ENCODE measurements at regions of chr5 and their contacts with region 1.

Region 1: GRCh38 chr5:80308526-80308925 is 11.3 kb upstream of the SPZ1 start:
- DNase-seq: no peak
- H3K4me3 ChIP-seq: no peak overlapping the region
- H3K27ac ChIP-seq: no peak overlapping the region
- H3K4me1 ChIP-seq: peaks cover 0 to 4% (median 0%) of the 10 kb centered on the region in 4 donors
- H3K27me3 ChIP-seq: no peaks in the 10 kb centered on the region
- CTCF ChIP-seq: no peak

Region 2: GRCh38 chr5:80093796-80094195 is 214.7 kb before region 1 on chr5:
- intact Hi-C with region 1: loop called (anchors 5 kb)
- DNase-seq: no peak
- H3K4me3 ChIP-seq: no peak overlapping the region
- H3K27ac ChIP-seq: no peak overlapping the region
- H3K4me1 ChIP-seq: no peaks in the 10 kb centered on the region
- H3K27me3 ChIP-seq: no peaks in the 10 kb centered on the region
- CTCF ChIP-seq: no peak

Region 3: DNA sequence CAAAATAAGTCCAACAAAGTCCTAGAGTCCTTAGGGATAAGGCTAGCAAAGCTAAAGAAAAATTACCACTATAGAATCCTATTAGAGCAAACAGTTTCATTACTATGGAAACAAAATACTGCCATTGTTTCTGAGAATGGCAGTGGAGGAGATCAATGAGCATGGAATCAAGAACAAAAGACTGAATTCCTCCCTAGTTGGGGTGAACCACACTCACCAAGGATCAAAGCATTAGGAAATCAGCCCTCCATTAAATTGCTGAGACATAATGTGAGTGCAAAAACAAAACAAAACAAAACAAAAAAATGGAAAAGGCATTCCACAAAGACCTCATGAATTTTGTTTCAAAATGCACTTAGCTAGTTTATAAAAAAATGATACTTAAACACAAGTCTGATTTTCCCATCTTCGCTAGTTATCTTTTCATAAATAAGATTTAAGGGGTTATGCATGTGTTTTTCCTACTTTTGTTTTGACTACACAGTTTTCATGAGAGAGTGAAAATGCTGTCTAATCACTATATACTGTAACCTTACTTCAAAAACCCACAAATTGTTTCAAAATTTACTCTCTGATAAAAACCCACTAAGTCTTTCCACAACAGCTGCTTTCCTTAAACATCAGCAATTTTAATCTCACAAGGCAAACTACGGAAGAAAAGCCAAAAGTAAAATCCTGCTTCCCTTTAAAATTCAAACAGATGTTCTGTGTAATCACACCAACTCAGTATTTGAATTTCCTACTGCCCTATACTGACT is 62.3 kb before region 1 on chr5:
- intact Hi-C with region 1: no loop called
- DNase-seq: no peak
- H3K4me3 ChIP-seq: no peak overlapping the region
- H3K27ac ChIP-seq: no peak overlapping the region
- H3K4me1 ChIP-seq: peaks cover 0 to 17% (median 11%) of the 10 kb centered on the region in 4 donors
- H3K27me3 ChIP-seq: no peaks in the 10 kb centered on the region
- CTCF ChIP-seq: no peak

Region 4: GRCh38 chr5:80275347-80275746 is 33.2 kb before region 1 on chr5:
- intact Hi-C with region 1: no loop called
- DNase-seq: no peak
- H3K4me3 ChIP-seq: no peak overlapping the region
- H3K27ac ChIP-seq: no peak overlapping the region
- H3K4me1 ChIP-seq: no peaks in the 10 kb centered on the region
- H3K27me3 ChIP-seq: no peaks in the 10 kb centered on the region
- CTCF ChIP-seq: peak in 1 of 2 experiments; percentile 20

Region 5: DNA sequence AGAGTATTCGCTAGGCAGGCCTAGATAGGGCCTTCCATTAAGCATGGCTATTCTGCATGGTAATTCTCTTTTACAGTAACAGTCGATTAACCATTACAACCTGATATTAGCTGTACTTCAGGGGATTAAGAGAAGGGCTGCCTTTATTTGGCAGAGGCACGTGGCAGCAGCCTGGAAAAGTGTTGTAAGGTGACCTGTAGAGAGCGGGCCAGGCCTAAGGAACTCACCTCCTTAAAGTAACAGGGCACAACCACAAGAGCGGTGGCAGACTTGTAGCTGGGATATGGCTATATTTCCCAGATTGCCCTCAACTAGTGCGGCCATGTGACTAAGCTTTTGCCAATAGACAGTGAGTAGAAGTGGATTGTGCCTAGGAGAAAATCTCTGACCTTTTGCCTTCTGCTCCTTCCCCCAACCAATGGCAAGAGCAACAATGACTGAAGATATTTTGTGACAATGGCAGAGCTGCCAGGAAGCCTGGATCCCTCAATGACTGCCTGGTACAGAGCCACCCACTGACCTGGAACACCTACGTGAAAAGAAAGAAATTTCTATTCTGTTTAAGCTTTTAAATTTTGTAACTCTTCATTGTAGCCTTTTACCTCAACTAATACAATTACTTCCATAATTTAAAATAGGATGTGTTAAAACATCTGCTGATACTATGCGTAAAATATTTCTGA is 280.5 kb after region 1 on chr5:
- intact Hi-C with region 1: no loop called
- DNase-seq: no peak
- H3K4me3 ChIP-seq: no peak overlapping the region
- H3K27ac ChIP-seq: no peak overlapping the region
- H3K4me1 ChIP-seq: no peaks in the 10 kb centered on the region
- H3K27me3 ChIP-seq: no peaks in the 10 kb centered on the region
- CTCF ChIP-seq: no peak

Region 6: DNA sequence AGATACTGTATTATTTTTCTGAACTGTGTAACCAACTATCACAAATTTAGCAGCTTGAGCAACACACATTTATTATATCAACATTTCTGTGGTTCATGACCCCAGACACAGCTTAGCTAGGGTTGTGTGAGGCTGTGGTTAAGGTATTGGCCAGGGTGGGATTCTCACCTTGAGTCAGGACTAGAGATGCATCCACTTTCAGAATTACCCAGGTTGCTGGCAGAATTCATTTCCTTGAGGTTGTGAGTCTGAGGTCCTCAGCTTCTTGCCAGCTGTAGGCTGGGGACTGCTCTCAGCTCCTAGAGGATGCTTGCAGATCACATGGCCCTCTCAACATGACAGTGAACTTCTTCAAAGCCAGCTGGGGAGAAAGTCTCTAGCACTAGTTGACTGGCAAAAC is 529.2 kb after region 1 on chr5:
- intact Hi-C with region 1: no loop called
- DNase-seq: no peak
- H3K4me3 ChIP-seq: no peak overlapping the region
- H3K27ac ChIP-seq: no peak overlapping the region
- H3K4me1 ChIP-seq: no peaks in the 10 kb centered on the region
- H3K27me3 ChIP-seq: no peaks in the 10 kb centered on the region
- CTCF ChIP-seq: no peak

Measured in tibial artery (tissue), 4 donors.